ENCODE measurements at regions of chr5 and their contacts with region 1.

Region 1: DNA sequence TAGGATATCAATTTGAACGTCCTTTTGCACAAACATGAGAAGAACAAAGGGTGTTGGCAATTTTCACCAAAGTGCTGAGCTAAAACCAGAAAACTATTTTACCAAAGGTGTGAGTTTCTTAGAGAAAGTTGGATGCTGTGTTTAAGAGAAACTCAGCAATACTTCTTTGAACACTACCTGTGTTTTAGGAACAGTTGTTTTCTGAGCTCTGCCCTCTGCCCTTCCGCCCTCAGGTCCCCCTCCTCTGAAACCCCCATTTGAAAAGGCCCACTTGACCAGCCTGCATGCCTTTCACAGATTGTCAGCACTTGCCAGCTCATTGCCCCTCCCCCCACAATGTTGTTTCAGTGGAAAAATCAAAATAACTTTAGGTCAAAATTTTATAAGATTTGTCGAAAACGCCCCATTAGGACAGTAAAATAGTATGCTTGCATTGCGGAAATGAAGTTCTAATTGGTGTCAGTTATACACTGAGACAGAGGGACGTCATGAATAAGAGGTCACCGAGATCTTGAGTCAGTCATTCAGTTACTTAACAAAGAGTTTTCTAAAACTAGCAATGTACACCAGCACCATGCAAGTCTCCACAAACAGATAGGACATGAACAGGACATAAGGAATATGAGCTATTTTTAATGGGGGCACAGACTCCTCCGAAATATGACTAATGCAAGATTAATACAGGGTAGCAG is 61.9 kb upstream of the IL7R start:
- DNase-seq: no peak
- ATAC-seq: no peak
- H3K4me3 ChIP-seq: no peak overlapping the region
- H3K27ac ChIP-seq: no peak overlapping the region
- H3K4me1 ChIP-seq: no peaks in the 10 kb centered on the region
- CTCF ChIP-seq: no peak
- EP300 ChIP-seq: no peak
- POLR2A ChIP-seq: no peak
- RAD21 ChIP-seq: no peak

Region 2: GRCh38 chr5:35777358-35778087 is 17.3 kb before region 1 on chr5:
- CTCF ChIA-PET with region 1: interaction called, 11 read pairs
- POLR2A ChIA-PET with region 1: no interaction called
- DNase-seq: peak; percentile 15 to 76
- ATAC-seq: peak; percentile 71 to 81; a peak in 5 of 6 replicates
- H3K4me3 ChIP-seq: no peak overlapping the region
- H3K27ac ChIP-seq: no peak overlapping the region
- H3K4me1 ChIP-seq: no peaks in the 10 kb centered on the region
- CTCF ChIP-seq: peak; percentile 63
- EP300 ChIP-seq: no peak
- POLR2A ChIP-seq: no peak
- RAD21 ChIP-seq: peak; percentile 41 to 54; a peak in 2 of 5 replicates

Measured in A549 (cell line).